ENCODE measurements at regions of chr3 and their contacts with region 1.

Region 1: GRCh38 chr3:163939911-163940310 is 1138.4 kb downstream of the SI start:
- DNase-seq: no peak
- ATAC-seq: no peak
- H3K4me3 ChIP-seq: no peak overlapping the region
- H3K4me3 Mint-ChIP-seq: no peak overlapping the region
- H3K27ac ChIP-seq: no peak overlapping the region
- H3K27ac Mint-ChIP-seq: no peak overlapping the region
- H3K4me1 ChIP-seq: no peaks in the 10 kb centered on the region
- H3K4me1 Mint-ChIP-seq: no peaks in the 10 kb centered on the region
- H3K27me3 ChIP-seq: no peaks in the 10 kb centered on the region
- H3K27me3 Mint-ChIP-seq: no peaks in the 10 kb centered on the region

Region 2: DNA sequence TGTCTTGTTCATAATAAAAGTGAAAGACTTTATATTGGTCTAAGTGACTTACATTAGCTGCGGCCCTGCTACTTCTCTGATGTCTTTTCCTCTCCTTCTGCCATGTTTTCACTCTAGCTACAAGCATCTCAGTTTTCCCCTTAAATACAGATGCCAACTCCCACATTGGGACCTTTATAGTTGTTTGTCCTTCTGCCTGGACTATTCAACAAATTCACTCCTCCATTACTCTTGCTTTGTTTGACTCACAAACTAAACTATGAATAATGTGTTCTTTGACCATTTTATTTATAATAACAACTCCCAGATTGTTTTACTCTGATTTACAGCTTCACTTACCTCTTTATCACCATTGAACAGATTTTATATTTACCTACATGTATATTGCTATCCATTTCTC is 231.5 kb before region 1 on chr3:
- CTCF ChIA-PET with region 1: no interaction called
- POLR2A ChIA-PET with region 1: no interaction called
- intact Hi-C with region 1: no loop called
- DNase-seq: no peak
- ATAC-seq: no peak
- H3K4me3 ChIP-seq: no peak overlapping the region
- H3K4me3 Mint-ChIP-seq: no peak overlapping the region
- H3K27ac ChIP-seq: no peak overlapping the region
- H3K27ac Mint-ChIP-seq: no peak overlapping the region
- H3K4me1 ChIP-seq: no peaks in the 10 kb centered on the region
- H3K4me1 Mint-ChIP-seq: no peaks in the 10 kb centered on the region
- H3K27me3 ChIP-seq: no peaks in the 10 kb centered on the region
- H3K27me3 Mint-ChIP-seq: no peaks in the 10 kb centered on the region

Region 3: DNA sequence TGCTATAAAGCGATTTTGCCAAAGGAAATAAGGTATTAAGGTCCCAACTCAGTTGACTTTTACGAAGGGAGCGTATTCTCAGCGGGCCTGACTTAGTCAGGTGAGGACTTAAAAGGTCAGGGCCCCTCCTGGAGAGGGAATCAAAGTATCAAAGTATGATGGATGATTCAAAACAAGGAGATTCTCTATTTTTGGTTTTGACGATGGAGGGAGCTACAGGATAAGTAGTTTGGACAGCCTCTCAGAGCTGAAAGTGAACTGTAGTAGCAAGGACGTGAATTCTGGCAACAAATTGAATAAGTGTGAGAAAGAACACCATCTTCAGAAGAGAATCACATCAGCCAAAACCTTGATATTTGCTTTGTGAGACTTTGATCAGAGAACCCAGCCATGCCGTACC is 48.1 kb before region 1 on chr3:
- CTCF ChIA-PET with region 1: no interaction called
- POLR2A ChIA-PET with region 1: no interaction called
- intact Hi-C with region 1: no loop called
- DNase-seq: no peak
- ATAC-seq: no peak
- H3K4me3 ChIP-seq: no peak overlapping the region
- H3K4me3 Mint-ChIP-seq: no peak overlapping the region
- H3K27ac ChIP-seq: no peak overlapping the region
- H3K27ac Mint-ChIP-seq: no peak overlapping the region
- H3K4me1 ChIP-seq: no peaks in the 10 kb centered on the region
- H3K4me1 Mint-ChIP-seq: no peaks in the 10 kb centered on the region
- H3K27me3 ChIP-seq: no peaks in the 10 kb centered on the region
- H3K27me3 Mint-ChIP-seq: no peaks in the 10 kb centered on the region

Region 4: DNA sequence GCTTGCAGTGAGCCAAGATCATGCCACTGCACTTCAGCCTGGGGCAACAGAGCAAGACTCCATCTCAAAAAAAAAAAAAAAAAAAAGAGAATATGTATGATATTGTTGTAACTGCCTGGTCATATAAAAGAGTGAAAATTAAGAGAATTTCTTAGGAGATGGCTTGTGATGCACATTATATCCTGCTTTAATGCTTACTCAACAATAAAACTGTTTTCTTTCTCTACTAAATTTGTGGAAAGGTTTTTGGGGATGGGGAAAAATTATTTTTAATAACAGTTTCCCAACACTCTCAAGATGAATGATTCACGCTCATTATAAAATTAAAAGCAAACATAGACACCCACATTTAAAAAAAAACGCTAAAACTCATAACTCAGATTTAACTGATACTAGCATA is 24.6 kb before region 1 on chr3:
- CTCF ChIA-PET with region 1: no interaction called
- POLR2A ChIA-PET with region 1: no interaction called
- intact Hi-C with region 1: loop called in 1 of 2 experiments (anchors 1 kb)
- DNase-seq: no peak
- ATAC-seq: no peak
- H3K4me3 ChIP-seq: no peak overlapping the region
- H3K4me3 Mint-ChIP-seq: no peak overlapping the region
- H3K27ac ChIP-seq: no peak overlapping the region
- H3K27ac Mint-ChIP-seq: no peak overlapping the region
- H3K4me1 ChIP-seq: no peaks in the 10 kb centered on the region
- H3K4me1 Mint-ChIP-seq: no peaks in the 10 kb centered on the region
- H3K27me3 ChIP-seq: no peaks in the 10 kb centered on the region
- H3K27me3 Mint-ChIP-seq: no peaks in the 10 kb centered on the region